GM10248 (cell line): ENCODE measurements at regions of chr5 and their contacts with region 1.

Region 1: GRCh38 chr5:151651997-151652645 is 34.6 kb downstream of the SPARC start:
- DNase-seq: peak; percentile 83
- CTCF ChIP-seq: peak; percentile 90

Region 2: GRCh38 chr5:151427258-151427657 is 224.9 kb before region 1 on chr5:
- CTCF ChIA-PET with region 1: interaction called, 11 read pairs
- POLR2A ChIA-PET with region 1: no interaction called
- DNase-seq: peak; percentile 88
- CTCF ChIP-seq: no peak

Region 3: DNA sequence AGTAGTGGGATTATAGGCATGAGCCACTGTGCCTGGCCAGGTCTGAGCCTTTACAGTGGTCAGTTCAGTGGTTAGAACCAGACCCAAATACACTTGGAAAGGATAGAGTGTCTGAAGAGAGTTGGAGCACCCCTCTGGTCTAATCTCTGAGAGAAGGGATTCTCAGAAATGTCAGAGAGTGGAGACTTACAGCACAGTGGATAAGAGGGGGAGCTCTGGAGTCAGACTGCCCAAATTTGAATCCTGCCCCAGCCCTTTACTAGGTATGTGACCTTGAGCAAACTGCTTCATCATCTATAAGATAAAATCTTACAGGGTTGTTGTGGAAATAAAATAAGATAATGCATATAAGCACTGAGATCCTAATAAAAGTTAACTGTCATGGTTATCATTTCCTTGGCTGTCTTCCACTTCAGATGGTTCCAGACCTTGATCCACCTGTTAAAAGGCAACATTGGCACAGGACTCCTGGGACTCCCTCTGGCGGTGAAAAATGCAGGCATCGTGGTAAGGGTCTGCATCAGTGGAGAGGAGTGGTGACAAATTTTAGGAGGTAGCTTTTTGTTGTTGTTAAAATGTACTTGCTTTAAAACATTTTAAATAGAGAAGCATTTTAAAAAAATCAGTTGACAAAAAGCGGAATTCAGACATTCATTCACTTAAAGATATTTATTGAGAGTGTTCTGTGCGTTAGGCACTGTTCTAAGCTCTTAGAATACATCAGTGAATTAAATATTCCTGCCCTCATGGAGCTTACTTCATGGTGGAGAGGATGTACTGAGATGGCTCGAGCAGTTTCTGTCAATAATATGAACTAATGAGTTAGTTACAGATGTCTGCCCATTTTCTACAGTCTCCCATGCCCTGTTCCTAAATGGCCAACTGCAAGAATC is 188.7 kb before region 1 on chr5:
- CTCF ChIA-PET with region 1: interaction called, 16 read pairs
- POLR2A ChIA-PET with region 1: no interaction called
- DNase-seq: no peak
- CTCF ChIP-seq: peak; percentile 34

Region 4: DNA sequence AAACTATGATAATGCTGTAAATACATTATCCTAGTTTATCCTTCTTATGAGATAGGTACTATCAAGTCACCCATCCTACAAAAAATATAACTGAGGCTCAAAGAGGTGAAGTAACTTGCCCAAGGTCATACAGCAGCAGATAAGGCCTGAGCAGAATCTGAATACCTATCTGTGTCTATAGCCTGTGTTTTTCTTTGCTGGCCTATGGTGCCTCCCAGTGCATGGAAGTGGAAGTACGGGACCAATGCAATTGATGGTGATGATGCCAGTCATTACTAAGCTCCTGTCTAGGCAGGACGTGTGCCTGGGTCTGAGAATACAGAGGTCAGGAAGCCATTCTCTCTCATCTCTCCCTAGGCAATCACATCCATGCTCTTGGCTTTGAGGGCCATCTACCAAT is 128.8 kb before region 1 on chr5:
- CTCF ChIA-PET with region 1: interaction called, 30 read pairs
- POLR2A ChIA-PET with region 1: no interaction called
- DNase-seq: peak; percentile 75
- CTCF ChIP-seq: peak; percentile 54

Region 5: GRCh38 chr5:151637676-151638075 is 14.4 kb before region 1 on chr5:
- CTCF ChIA-PET with region 1: interaction called, 72 read pairs
- POLR2A ChIA-PET with region 1: no interaction called
- DNase-seq: no peak
- CTCF ChIP-seq: no peak

Region 6: DNA sequence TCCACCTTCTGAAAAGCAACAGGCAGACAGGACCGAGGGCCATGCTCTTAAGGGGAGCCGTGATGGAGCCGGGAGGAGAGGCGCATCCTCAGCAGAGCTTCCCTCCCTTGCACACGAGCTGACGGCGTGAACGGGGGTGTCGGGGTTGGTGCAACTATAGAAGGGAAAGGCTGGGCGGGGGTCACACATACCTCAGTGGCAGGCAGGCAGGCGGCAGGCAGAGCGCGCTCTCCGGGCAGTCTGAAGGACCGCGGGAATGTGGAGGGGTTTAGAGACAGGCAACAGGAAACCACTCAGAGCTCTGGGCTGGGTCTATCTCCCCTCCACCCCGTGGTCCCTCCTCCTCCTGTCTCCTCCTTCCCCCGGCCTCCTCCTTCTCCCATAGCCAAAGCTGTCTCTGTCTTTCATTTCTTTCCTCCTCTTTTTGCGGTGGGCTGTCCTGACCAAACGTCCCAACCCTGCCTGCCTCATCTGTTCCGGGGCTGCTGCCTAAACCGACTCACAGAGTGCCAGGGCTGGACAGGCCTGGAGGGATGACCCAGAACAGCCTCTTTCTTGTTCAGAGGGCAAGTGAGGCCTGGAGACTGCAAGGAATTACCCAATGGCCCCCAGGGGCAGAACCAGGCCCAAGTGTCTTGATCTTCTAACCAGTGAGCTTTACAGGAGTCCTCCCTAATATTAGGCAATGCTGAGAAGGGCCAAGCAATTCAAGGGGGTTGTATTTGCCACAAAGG is 34.7 kb after region 1 on chr5 and contains the start of gene SPARC:
- CTCF ChIA-PET with region 1: interaction called, 11 read pairs
- POLR2A ChIA-PET with region 1: no interaction called
- DNase-seq: peak; percentile 45
- CTCF ChIP-seq: no peak

Region 7: GRCh38 chr5:151719228-151720000 is 67.3 kb after region 1 on chr5:
- CTCF ChIA-PET with region 1: interaction called, 60 read pairs
- POLR2A ChIA-PET with region 1: no interaction called
- DNase-seq: no peak
- CTCF ChIP-seq: peak; percentile 40

Region 8: GRCh38 chr5:152259702-152260101 is 607.6 kb after region 1 on chr5:
- CTCF ChIA-PET with region 1: no interaction called
- POLR2A ChIA-PET with region 1: no interaction called
- DNase-seq: no peak
- CTCF ChIP-seq: no peak

Region 9: DNA sequence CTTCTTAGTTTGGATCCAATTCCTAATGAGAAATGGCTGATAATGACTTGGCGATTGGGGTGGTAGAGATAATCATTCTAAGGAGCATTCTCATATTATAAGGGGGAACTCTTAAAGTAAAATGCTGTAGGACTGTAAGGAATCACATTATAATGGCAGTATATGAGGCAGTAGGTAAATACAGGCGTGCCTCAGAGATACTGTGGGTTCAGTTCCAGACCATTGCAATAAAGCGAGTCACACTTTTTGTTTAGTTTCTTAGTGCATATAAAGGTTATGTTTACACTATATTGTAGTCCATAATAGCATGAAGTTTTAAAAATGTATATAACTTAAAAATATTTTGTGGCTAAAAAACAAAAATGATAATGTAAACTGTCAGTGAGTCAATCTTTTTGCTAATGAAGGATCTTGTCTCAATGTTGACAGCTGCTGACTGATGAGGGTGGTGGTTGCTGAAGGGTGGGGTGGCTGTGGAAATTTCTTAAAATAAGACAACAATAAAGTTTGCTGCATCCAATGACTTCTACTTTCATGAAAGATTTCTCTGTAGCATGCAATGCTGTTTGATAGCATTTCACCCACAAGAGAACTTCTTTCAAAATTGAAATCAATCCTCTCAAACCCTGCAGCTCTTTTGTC is 737.2 kb after region 1 on chr5:
- CTCF ChIA-PET with region 1: no interaction called
- POLR2A ChIA-PET with region 1: no interaction called
- DNase-seq: no peak
- CTCF ChIP-seq: no peak